ENCODE measurements at regions of chr9 and their contacts with region 1.

Region 1: DNA sequence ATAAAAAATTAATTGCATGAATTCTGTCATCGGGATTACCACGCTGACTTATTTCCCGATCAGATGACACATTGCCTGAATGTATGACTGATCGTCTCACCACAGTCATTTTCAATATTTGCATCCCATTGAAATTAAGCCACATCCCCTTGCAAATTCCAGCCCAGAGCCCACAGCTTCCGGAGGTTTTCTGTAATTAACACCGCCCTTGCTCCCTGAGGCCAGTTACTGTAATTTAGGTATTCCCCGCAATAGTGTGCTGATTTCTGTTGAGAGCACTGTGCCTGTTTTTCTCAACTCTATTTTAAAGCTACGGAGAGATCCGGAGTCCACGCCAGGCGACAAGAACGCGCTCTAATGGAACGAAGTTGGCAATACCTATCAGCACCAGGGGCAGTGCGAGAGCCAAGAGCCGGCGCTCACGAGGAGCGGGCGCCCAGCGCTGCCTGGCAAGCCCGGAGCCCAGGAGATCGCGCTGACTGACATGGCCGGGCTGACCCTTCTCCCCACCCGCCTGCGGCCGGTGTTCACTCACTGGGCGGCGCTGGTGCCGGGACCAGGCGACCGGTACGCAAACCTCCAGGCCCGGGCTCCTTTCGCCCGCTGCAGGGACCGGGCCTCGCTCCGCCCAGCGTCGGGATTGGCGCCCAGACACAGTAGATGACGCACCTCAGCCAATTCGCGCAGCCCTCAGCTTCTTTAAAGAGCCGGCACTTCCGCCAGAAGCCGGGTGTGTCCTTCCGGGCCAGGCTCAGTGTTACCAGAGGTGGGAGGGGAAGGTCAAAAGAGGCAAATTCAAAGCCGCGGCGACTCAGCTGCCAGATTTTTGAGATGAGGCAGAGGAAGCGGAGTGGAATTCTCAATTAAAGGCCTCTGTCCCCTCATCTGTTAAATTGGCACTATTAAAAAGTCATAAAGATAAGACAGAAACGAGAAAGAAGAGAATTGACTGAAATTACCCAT is at the start of gene PLGRKT:
- DNase-seq: peak; percentile 95
- H3K4me3 Mint-ChIP-seq: peak within 1 kb of the TSS; percentile 97
- H3K27ac Mint-ChIP-seq: peak within 1 kb of the TSS; percentile 98
- H3K4me1 Mint-ChIP-seq: peaks cover 59% of the 10 kb centered on the region
- H3K27me3 Mint-ChIP-seq: no peaks in the 10 kb centered on the region
- total RNA-seq, gene PLGRKT: 52.9 to 59.4 TPM

Region 2: DNA sequence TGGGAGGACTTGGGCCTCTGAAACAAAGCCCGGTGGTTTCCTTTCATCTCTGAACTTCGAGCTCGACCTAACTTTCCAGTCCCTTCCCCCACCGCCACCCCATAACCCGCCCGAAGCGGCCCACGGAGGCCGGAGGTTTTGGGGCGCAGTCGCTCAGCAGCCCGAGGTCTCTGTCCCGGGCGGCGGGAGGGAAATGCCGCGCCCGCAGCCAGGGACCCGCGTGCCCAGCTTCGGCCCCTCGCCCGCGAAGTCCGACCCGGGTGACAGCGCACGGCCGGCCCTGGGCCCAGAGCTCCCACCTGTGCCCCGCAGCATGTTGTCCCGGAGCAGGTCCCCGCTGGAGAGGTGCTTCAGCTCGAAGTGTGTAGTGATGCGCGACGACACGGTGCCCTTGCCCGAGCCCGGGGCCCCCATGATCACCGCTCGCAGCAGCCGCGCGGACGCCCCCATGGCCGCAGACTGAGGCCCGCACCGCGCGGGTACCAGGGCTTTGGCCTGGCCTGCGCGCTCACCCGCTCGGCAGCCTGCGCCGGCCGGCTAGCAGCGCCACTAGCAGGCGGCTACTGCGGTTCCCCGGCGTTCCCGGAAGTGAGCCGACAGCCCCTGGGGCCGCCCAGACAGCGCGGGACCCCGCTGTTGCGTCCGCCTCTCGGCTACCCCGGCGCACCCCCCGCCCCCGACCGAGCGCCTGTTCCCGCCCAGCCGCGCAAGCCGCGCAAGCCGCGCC is 696.7 kb before region 1 on chr9 and contains the start of gene AK3:
- CTCF ChIA-PET with region 1: no interaction called
- POLR2A ChIA-PET with region 1: no interaction called
- intact Hi-C with region 1: loop called (anchors 5 kb)
- DNase-seq: peak; percentile 90
- H3K4me3 Mint-ChIP-seq: peak within 1 kb of the TSS; percentile 83
- H3K27ac Mint-ChIP-seq: peak within 1 kb of the TSS; percentile 78
- H3K4me1 Mint-ChIP-seq: peaks cover 34% of the 10 kb centered on the region
- H3K27me3 Mint-ChIP-seq: no peaks in the 10 kb centered on the region
- total RNA-seq, gene AK3: 33.8 to 34.5 TPM

Region 3: GRCh38 chr9:4984621-4985385 is 452.7 kb before region 1 on chr9 and contains the start of gene JAK2:
- CTCF ChIA-PET with region 1: interaction called, 4 read pairs
- POLR2A ChIA-PET with region 1: interaction called, 4 read pairs
- intact Hi-C with region 1: loop called (anchors 5 kb)
- DNase-seq: peak; percentile 91
- H3K4me3 Mint-ChIP-seq: peak within 1 kb of the TSS; percentile 90
- H3K27ac Mint-ChIP-seq: peak within 1 kb of the TSS; percentile 96
- H3K4me1 Mint-ChIP-seq: peaks cover 52% of the 10 kb centered on the region
- H3K27me3 Mint-ChIP-seq: no peaks in the 10 kb centered on the region
- total RNA-seq, gene JAK2: 23.2 to 25.5 TPM

Region 4: GRCh38 chr9:5336688-5337087 is 100.8 kb before region 1 on chr9:
- CTCF ChIA-PET with region 1: no interaction called
- POLR2A ChIA-PET with region 1: no interaction called
- intact Hi-C with region 1: loop called (anchors 1 kb)
- DNase-seq: peak; percentile 41
- H3K4me3 Mint-ChIP-seq: peak overlapping the region; percentile 37
- H3K27ac Mint-ChIP-seq: peak overlapping the region; percentile 69
- H3K4me1 Mint-ChIP-seq: peaks cover 41% of the 10 kb centered on the region
- H3K27me3 Mint-ChIP-seq: no peaks in the 10 kb centered on the region

Region 5: DNA sequence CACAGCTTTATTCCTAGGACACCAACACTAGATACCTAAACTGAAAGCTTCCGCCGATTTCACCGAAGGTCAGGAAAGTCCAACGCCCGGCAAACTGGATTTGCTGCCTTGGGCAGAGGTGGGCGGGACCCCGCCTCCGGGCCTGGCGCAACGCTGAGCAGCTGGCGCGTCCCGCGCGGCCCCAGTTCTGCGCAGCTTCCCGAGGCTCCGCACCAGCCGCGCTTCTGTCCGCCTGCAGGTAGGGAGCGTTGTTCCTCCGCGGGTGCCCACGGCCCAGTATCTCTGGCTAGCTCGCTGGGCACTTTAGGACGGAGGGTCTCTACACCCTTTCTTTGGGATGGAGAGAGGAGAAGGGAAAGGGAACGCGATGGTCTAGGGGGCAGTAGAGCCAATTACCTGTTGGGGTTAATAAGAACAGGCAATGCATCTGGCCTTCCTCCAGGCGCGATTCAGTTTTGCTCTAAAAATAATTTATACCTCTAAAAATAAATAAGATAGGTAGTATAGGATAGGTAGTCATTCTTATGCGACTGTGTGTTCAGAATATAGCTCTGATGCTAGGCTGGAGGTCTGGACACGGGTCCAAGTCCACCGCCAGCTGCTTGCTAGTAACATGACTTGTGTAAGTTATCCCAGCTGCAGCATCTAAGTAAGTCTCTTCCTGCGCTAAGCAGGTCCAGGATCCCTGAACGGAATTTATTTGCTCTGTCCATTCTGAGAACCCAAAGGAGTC is 13.0 kb after region 1 on chr9 and contains the start of gene CD274:
- CTCF ChIA-PET with region 1: interaction called, 64 read pairs
- POLR2A ChIA-PET with region 1: interaction called, 57 read pairs
- intact Hi-C with region 1: loop called (anchors 1 kb)
- DNase-seq: peak; percentile 92
- H3K4me3 Mint-ChIP-seq: peak within 1 kb of the TSS; percentile 86
- H3K27ac Mint-ChIP-seq: peak within 1 kb of the TSS; percentile 90
- H3K4me1 Mint-ChIP-seq: peaks cover 59% of the 10 kb centered on the region
- H3K27me3 Mint-ChIP-seq: no peaks in the 10 kb centered on the region
- total RNA-seq, gene CD274: 28.3 to 32.4 TPM

Region 6: DNA sequence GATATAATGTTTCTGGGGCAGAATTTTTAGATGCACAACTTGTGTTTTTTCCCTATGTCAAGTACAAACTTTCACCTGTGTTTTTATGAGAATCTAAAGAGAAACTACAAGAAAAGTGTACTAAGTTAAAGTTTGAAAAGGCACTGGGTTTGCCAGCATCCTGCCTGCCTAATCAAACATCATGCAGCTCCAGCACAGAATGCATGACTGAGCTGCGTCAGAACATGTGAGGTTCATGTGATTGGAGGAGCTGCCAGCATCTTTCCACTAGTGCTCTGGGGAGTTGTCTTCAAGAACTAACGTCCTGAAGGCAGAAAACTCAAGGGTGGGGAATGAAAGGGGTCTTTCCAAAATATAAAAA is 145.3 kb after region 1 on chr9:
- CTCF ChIA-PET with region 1: interaction called, 61 read pairs
- POLR2A ChIA-PET with region 1: interaction called, 8 read pairs
- intact Hi-C with region 1: loop called (anchors 1 kb)
- DNase-seq: peak; percentile 61
- H3K4me3 Mint-ChIP-seq: no peak overlapping the region
- H3K27ac Mint-ChIP-seq: peak overlapping the region; percentile 80
- H3K4me1 Mint-ChIP-seq: peaks cover 66% of the 10 kb centered on the region
- H3K27me3 Mint-ChIP-seq: no peaks in the 10 kb centered on the region

Measured in activated CD4-positive, alpha-beta memory T cell treated with anti-CD3 and anti-CD28 coated beads for 36 hours (primary cell).